ENCODE measurements at regions of chr2 and their contacts with region 1.

Region 1: GRCh38 chr2:232974396-232974795 is 38.7 kb downstream of the NGEF start:
- DNase-seq: no peak
- H3K4me3 ChIP-seq: no peak overlapping the region
- H3K27ac ChIP-seq: no peak overlapping the region
- H3K4me1 ChIP-seq: no peaks in the 10 kb centered on the region
- H3K27me3 ChIP-seq: no peaks in the 10 kb centered on the region
- CTCF ChIP-seq: no peak
- EP300 ChIP-seq: no peak
- POLR2A ChIP-seq: no peak

Region 2: DNA sequence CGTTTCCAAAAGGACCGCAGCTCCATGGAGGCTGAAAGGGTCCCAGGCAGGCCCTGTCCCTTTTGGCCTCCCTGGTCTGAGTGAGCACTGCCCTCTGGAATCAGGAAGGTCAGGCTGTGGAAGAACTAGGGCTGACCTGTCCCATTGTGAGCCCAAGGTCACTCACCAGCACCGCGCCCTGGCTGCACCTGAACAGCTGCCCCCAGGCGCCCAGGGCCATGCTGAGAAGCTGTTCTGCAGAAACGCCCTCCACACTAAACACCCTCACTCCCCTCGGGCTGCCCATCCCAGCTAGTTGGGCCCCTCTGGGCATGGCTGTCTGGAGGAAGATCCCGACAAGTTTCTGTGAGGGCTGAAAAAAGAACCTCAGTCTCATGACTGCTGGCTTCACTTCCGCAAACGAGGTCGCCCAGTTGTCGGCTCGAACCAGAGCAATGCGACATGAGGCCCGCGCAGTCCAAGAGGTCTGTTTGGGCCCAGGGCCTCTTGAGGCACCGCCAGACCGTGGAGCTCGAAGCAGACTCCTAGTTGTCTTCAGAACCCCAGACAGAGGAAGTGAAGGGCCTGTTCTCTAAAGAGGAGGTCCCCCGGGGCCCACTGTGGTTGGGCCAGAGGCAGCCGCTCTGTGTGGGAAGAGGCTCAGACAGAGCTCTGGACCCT is 150.2 kb after region 1 on chr2:
- intact Hi-C with region 1: no loop called
- DNase-seq: no peak
- H3K4me3 ChIP-seq: no peak overlapping the region
- H3K27ac ChIP-seq: no peak overlapping the region
- H3K4me1 ChIP-seq: no peaks in the 10 kb centered on the region
- H3K27me3 ChIP-seq: no peaks in the 10 kb centered on the region
- CTCF ChIP-seq: no peak
- EP300 ChIP-seq: no peak
- POLR2A ChIP-seq: no peak

Region 3: GRCh38 chr2:234834228-234834923 is 1860.0 kb after region 1 on chr2:
- intact Hi-C with region 1: loop called in 1 of 4 experiments (anchors 5 kb)
- DNase-seq: no peak
- H3K4me3 ChIP-seq: no peak overlapping the region
- H3K27ac ChIP-seq: no peak overlapping the region
- H3K4me1 ChIP-seq: no peaks in the 10 kb centered on the region
- H3K27me3 ChIP-seq: no peaks in the 10 kb centered on the region
- CTCF ChIP-seq: no peak
- EP300 ChIP-seq: no peak
- POLR2A ChIP-seq: no peak